T-cell (primary cell): ENCODE measurements at regions of chr2 and their contacts with region 1.

Region 1: GRCh38 chr2:147405651-147406050 is 439.2 kb upstream of the ACVR2A start:
- DNase-seq: no peak
- ATAC-seq: no peak
- H3K4me3 ChIP-seq: no peak overlapping the region
- H3K4me3 Mint-ChIP-seq: no peak overlapping the region
- H3K27ac ChIP-seq: no peak overlapping the region
- H3K27ac Mint-ChIP-seq: peak overlapping the region in 1 of 2 donors; percentile 29
- H3K4me1 ChIP-seq: no peaks in the 10 kb centered on the region
- H3K4me1 Mint-ChIP-seq: peaks cover 0 to 8% (median 0%) of the 10 kb centered on the region in 3 donors
- H3K27me3 ChIP-seq: no peaks in the 10 kb centered on the region
- H3K27me3 Mint-ChIP-seq: no peaks in the 10 kb centered on the region

Region 2: GRCh38 chr2:147173194-147173581 is 232.5 kb before region 1 on chr2:
- CTCF ChIA-PET with region 1: no interaction called
- POLR2A ChIA-PET with region 1: no interaction called
- DNase-seq: no peak
- ATAC-seq: no peak
- H3K4me3 ChIP-seq: no peak overlapping the region
- H3K4me3 Mint-ChIP-seq: no peak overlapping the region
- H3K27ac ChIP-seq: no peak overlapping the region
- H3K27ac Mint-ChIP-seq: no peak overlapping the region
- H3K4me1 ChIP-seq: no peaks in the 10 kb centered on the region
- H3K4me1 Mint-ChIP-seq: peaks cover 0 to 3% (median 0%) of the 10 kb centered on the region in 3 donors
- H3K27me3 ChIP-seq: no peaks in the 10 kb centered on the region
- H3K27me3 Mint-ChIP-seq: peaks cover 3 to 7% of the 10 kb centered on the region in 2 donors

Region 3: DNA sequence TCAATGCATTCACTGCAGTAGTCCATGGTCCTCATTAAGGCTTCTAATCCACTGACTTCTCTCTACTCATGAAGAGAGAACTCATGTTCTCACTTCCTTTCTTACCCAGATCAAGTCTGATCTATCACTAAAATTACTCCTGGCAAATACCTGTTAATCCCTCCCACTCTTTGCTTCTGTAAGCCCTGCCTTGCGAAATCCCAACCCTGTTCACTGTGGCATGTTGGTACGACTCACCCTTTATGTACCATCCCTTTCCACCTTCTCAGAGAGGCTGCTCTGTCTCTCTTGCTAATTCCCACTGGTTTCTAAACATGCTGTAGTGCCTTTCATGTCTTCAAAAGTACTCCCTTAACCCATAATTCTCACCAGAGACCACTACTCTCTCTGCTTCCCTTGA is 167.0 kb after region 1 on chr2:
- CTCF ChIA-PET with region 1: no interaction called
- POLR2A ChIA-PET with region 1: interaction called in 1 of 2 experiments, 10 read pairs
- DNase-seq: no peak
- ATAC-seq: no peak
- H3K4me3 ChIP-seq: no peak overlapping the region
- H3K4me3 Mint-ChIP-seq: no peak overlapping the region
- H3K27ac ChIP-seq: no peak overlapping the region
- H3K27ac Mint-ChIP-seq: no peak overlapping the region
- H3K4me1 ChIP-seq: no peaks in the 10 kb centered on the region
- H3K4me1 Mint-ChIP-seq: no peaks in the 10 kb centered on the region
- H3K27me3 ChIP-seq: no peaks in the 10 kb centered on the region
- H3K27me3 Mint-ChIP-seq: no peaks in the 10 kb centered on the region

Region 4: GRCh38 chr2:147844697-147845410 is 439.2 kb after region 1 on chr2 and contains the start of gene ACVR2A:
- CTCF ChIA-PET with region 1: no interaction called
- POLR2A ChIA-PET with region 1: interaction called in 1 of 2 experiments, 11 read pairs
- DNase-seq: peak; percentile 0 to 67 (median 27)
- ATAC-seq: peak; percentile 21 to 25 (median 22)
- H3K4me3 ChIP-seq: peak within 1 kb of the TSS; percentile 82 to 95
- H3K4me3 Mint-ChIP-seq: peak within 1 kb of the TSS; percentile 95 to 98 (median 98)
- H3K27ac ChIP-seq: peak within 1 kb of the TSS; percentile 47
- H3K27ac Mint-ChIP-seq: peak within 1 kb of the TSS; percentile 90 to 92
- H3K4me1 ChIP-seq: peaks cover 8 to 18% of the 10 kb centered on the region in 2 experiments
- H3K4me1 Mint-ChIP-seq: peaks cover 40 to 51% (median 45%) of the 10 kb centered on the region in 3 donors
- H3K27me3 ChIP-seq: peaks cover 5% of the 10 kb centered on the region in 2 experiments
- H3K27me3 Mint-ChIP-seq: peaks cover 0 to 4% of the 10 kb centered on the region in 2 donors
- total RNA-seq, gene ACVR2A: 10.4 to 12.5 (median 11.0) TPM